ENCODE measurements at regions of chr15 and their contacts with region 1.

Region 1: GRCh38 chr15:91942676-91943576 is 89.4 kb downstream of the SLCO3A1 start:
- DNase-seq: peak; percentile 79 to 97
- H3K4me3 ChIP-seq: peak overlapping the region; percentile 51
- H3K27ac ChIP-seq: peak overlapping the region; percentile 100
- H3K4me1 ChIP-seq: peaks cover 83% of the 10 kb centered on the region
- H3K27me3 ChIP-seq: no peaks in the 10 kb centered on the region
- CTCF ChIP-seq: no peak

Region 2: DNA sequence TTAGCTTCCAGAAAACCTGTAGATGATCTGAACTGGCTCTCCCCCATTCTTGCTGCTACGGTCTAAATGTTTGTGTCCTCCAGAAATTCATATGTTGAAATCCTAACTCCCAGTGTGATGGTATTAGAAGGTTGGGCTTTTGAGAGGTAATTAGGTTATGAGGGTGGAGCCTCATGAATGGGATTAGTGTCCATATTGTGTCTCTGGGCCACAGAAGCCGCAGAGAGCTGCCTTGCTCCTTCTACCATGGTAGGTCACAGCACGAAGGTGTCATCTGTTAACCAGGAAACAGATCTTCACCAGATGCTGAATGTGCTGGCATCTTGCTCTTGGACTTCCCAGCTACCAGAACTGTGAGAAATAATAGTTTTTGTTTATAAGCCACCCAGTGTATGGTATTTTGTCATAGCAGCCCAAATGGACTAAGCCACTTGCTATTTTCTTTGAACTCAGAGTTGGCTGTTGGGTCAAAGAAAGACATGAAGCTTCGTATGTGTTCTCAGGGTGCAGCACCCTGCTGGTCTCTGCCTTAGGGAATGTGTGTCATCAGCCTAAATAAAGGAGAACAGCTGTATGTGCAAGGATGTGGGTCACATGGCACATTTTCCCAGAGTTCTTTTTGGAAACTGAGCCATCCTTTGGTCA is 406.9 kb before region 1 on chr15:
- CTCF ChIA-PET with region 1: no interaction called
- POLR2A ChIA-PET with region 1: interaction called, 6 read pairs
- intact Hi-C with region 1: loop called (anchors 2 kb)
- DNase-seq: no peak
- H3K4me3 ChIP-seq: no peak overlapping the region
- H3K27ac ChIP-seq: peak overlapping the region; percentile 93
- H3K4me1 ChIP-seq: peaks cover 38% of the 10 kb centered on the region
- H3K27me3 ChIP-seq: no peaks in the 10 kb centered on the region
- CTCF ChIP-seq: no peak

Region 3: GRCh38 chr15:91867581-91868026 is 75.3 kb before region 1 on chr15:
- CTCF ChIA-PET with region 1: interaction called, 7 read pairs
- POLR2A ChIA-PET with region 1: interaction called, 10 read pairs
- intact Hi-C with region 1: loop called (anchors 1 kb)
- DNase-seq: peak; percentile 93 to 95
- H3K4me3 ChIP-seq: peak overlapping the region; percentile 43; the same call in 1 of the 2 replicates
- H3K27ac ChIP-seq: peak overlapping the region; percentile 95
- H3K4me1 ChIP-seq: peaks cover 57% of the 10 kb centered on the region
- H3K27me3 ChIP-seq: no peaks in the 10 kb centered on the region
- CTCF ChIP-seq: no peak

Region 4: GRCh38 chr15:91956026-91956723 is 13.2 kb after region 1 on chr15:
- CTCF ChIA-PET with region 1: no interaction called
- POLR2A ChIA-PET with region 1: interaction called, 17 read pairs
- intact Hi-C with region 1: no loop called
- DNase-seq: no peak
- H3K4me3 ChIP-seq: no peak overlapping the region
- H3K27ac ChIP-seq: peak overlapping the region; percentile 47
- H3K4me1 ChIP-seq: peaks cover 48% of the 10 kb centered on the region
- H3K27me3 ChIP-seq: no peaks in the 10 kb centered on the region
- CTCF ChIP-seq: no peak

Region 5: GRCh38 chr15:92077353-92078085 is 134.6 kb after region 1 on chr15:
- CTCF ChIA-PET with region 1: interaction called, 6 read pairs
- POLR2A ChIA-PET with region 1: no interaction called
- intact Hi-C with region 1: loop called (anchors 2 kb)
- DNase-seq: peak; percentile 47 to 63
- H3K4me3 ChIP-seq: no peak overlapping the region
- H3K27ac ChIP-seq: no peak overlapping the region
- H3K4me1 ChIP-seq: peaks cover 7% of the 10 kb centered on the region
- H3K27me3 ChIP-seq: no peaks in the 10 kb centered on the region
- CTCF ChIP-seq: peak; percentile 76

Measured in PC-9 (cell line).